BJ (cell line): ENCODE measurements at regions of chr17 and their contacts with region 1.

Region 1: DNA sequence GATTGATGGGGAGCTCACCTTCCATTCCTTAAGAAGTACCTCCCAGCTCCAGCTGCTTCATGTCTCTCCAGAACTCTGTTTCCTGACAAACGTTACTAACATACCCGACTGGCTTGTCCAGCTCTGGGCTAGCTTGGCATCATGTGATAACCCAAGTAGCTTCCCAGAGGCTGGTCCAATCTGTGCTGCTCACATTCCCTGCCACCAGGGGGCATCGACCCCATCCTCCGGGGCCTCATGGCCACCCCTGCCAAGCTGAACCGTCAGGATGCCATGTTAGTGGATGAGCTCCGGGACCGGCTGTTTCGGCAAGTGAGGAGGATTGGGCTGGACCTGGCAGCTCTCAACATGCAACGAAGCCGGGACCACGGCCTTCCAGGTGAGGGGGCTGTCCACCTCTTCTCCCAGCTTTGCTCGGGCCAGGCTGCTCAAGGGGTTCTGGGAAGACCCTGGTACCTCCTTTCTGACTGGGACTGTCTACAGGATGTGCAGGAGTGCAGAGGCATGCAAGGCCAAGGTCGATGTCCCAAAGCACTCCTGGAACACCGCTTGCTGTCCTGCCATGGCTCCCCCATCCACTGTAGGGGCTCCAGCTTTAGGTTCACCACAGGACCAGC is 7.6 kb downstream of the EPX start:
- DNase-seq: no peak
- H3K4me3 ChIP-seq: no peak overlapping the region
- H3K27me3 ChIP-seq: peaks cover 3% of the 10 kb centered on the region
- CTCF ChIP-seq: peak; percentile 61

Region 2: GRCh38 chr17:58189436-58190146 is 10.5 kb before region 1 on chr17:
- CTCF ChIA-PET with region 1: interaction called, 19 read pairs
- POLR2A ChIA-PET with region 1: no interaction called
- DNase-seq: peak; percentile 26
- H3K4me3 ChIP-seq: no peak overlapping the region
- H3K27me3 ChIP-seq: peaks cover 5% of the 10 kb centered on the region
- CTCF ChIP-seq: no peak

Region 3: DNA sequence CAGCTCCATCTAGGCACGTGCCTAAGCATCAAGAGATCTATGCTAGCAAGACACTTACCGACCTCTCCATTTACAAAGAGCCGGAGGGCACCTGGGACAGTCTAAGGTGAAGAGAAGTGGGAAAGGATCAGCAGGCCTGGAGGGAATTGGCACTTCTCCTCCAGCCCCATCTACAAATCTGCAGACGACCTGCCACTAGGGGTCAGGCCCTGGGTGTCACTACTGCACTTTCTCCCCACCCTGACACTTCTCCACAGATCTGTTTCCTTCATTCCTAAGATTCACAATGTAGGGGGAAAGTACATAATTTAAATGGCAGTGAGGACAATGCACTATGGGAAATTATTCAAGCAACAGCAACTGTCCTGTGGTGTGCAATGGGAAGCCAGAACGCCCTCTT is 10.8 kb after region 1 on chr17:
- CTCF ChIA-PET with region 1: interaction called, 14 read pairs
- POLR2A ChIA-PET with region 1: no interaction called
- DNase-seq: no peak
- H3K4me3 ChIP-seq: no peak overlapping the region
- H3K27me3 ChIP-seq: no peaks in the 10 kb centered on the region
- CTCF ChIP-seq: no peak

Region 4: GRCh38 chr17:58249270-58250133 is 49.4 kb after region 1 on chr17:
- CTCF ChIA-PET with region 1: interaction called, 14 read pairs
- POLR2A ChIA-PET with region 1: no interaction called
- DNase-seq: no peak
- H3K4me3 ChIP-seq: peak overlapping the region; percentile 55
- H3K27me3 ChIP-seq: peaks cover 6% of the 10 kb centered on the region
- CTCF ChIP-seq: peak; percentile 94